K562 (cell line): ENCODE measurements at regions of chr9 and their contacts with region 1.

Region 1: GRCh38 chr9:4382722-4383317 is 83.0 kb upstream of the GLIS3 start:
- DNase-seq: peak in 1 of 4 experiments; percentile 10
- ATAC-seq: no peak
- H3K4me3 ChIP-seq: no peak overlapping the region
- H3K27ac ChIP-seq: no peak overlapping the region
- H3K4me1 ChIP-seq: no peaks in the 10 kb centered on the region
- H3K27me3 ChIP-seq: no peaks in the 10 kb centered on the region
- CTCF ChIP-seq: peak in 2 of 3 experiments; percentile 30 to 53; a peak in 3 of 6 replicates
- EP300 ChIP-seq: no peak
- POLR2A ChIP-seq: no peak
- RAD21 ChIP-seq: peak in 1 of 2 experiments; percentile 40; a peak in 2 of 4 replicates

Region 2: GRCh38 chr9:4297151-4297785 is 85.6 kb before region 1 on chr9:
- CTCF ChIA-PET with region 1: no interaction called
- POLR2A ChIA-PET with region 1: no interaction called
- in situ Hi-C with region 1: no loop called
- intact Hi-C with region 1: no loop called
- DNase-seq: peak; percentile 15 to 46 (median 28)
- ATAC-seq: peak; percentile 91
- H3K4me3 ChIP-seq: peak overlapping the region; percentile 19
- H3K27ac ChIP-seq: no peak overlapping the region
- H3K4me1 ChIP-seq: peaks cover 0 to 20% of the 10 kb centered on the region in 2 experiments; a peak in 2 of 5 replicates
- H3K27me3 ChIP-seq: peaks cover 8 to 23% of the 10 kb centered on the region in 2 experiments; a peak in 3 of 5 replicates
- CTCF ChIP-seq: peak; percentile 15 to 26 (median 24); a peak in 2 of 6 replicates
- EP300 ChIP-seq: no peak
- POLR2A ChIP-seq: no peak
- RAD21 ChIP-seq: no peak; a peak in 2 of 4 replicates

Region 3: DNA sequence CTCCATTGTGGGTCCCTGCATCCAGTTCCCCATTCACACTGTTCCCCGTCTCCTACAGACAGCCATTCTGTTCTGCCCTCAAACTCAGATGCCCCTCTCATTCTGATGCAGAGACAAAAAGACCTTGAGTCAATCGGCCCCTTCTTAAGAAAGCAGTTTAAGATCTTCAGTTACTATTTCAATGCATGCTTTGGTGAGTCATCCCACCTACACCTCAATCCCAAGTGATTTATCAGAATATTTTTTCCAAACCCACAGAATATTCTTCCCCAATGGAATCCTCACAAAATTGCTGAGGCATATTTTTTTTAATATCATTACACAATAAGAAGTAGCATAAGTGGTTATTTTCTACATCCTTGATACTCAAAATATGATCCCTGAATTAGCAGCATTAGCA is 15.1 kb after region 1 on chr9:
- CTCF ChIA-PET with region 1: no interaction called
- POLR2A ChIA-PET with region 1: no interaction called
- in situ Hi-C with region 1: no loop called
- intact Hi-C with region 1: no loop called
- DNase-seq: no peak
- ATAC-seq: no peak
- H3K4me3 ChIP-seq: no peak overlapping the region
- H3K27ac ChIP-seq: no peak overlapping the region
- H3K4me1 ChIP-seq: no peaks in the 10 kb centered on the region
- H3K27me3 ChIP-seq: no peaks in the 10 kb centered on the region
- CTCF ChIP-seq: no peak
- EP300 ChIP-seq: no peak
- POLR2A ChIP-seq: no peak
- RAD21 ChIP-seq: no peak

Region 4: DNA sequence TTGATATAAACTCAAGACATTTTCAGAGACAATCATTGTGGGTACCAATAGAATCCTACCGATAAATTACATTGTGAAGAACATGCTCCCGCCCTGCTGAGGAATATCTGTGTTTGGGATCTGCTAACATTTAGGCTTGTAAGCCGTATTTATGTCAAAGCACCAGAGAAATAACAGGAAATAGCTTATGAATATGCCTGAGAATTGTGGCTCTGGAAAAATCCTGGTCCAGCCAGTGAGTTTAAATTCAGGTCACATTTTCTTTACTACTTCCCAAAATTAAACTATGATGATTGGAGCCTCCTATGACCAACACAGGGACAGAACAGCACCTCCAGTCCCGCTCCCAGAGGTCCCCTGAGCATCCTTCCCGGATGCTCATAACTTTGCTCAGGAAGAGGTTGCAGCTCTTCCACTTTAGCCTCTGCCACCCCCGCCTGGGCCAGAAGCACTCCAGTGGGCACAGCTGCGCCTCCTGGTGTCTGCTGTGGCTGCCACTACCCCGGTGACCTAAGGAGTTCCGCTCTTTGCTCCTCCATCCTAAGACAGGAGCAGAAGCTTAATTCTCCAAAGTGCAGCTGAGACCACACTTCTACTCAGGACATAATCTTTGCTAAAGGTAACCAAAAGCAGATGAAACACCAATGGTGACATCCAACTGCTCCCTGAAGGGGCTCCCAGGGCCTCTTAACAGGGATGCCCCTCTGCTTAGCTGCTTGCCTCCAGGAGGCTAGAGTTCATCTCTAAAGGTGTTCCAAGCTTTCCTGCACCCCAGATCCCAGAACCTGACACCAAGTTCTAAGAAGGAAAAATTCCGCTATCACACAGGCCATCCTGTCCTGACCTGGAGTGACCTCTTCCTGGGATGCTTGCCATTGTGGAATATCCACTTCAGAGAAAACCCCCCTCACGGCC is 166.2 kb after region 1 on chr9:
- CTCF ChIA-PET with region 1: no interaction called
- POLR2A ChIA-PET with region 1: interaction called, 3 read pairs
- in situ Hi-C with region 1: no loop called
- intact Hi-C with region 1: loop called (anchors 5 kb)
- DNase-seq: peak; percentile 5 to 22 (median 13)
- ATAC-seq: peak; percentile 86
- H3K4me3 ChIP-seq: no peak overlapping the region
- H3K27ac ChIP-seq: no peak overlapping the region
- H3K4me1 ChIP-seq: no peaks in the 10 kb centered on the region
- H3K27me3 ChIP-seq: no peaks in the 10 kb centered on the region
- CTCF ChIP-seq: peak; percentile 51 to 64 (median 51)
- EP300 ChIP-seq: no peak
- POLR2A ChIP-seq: no peak
- RAD21 ChIP-seq: peak; percentile 17 to 46; a peak in 3 of 4 replicates

Region 5: GRCh38 chr9:4620057-4620760 is 237.4 kb after region 1 on chr9:
- CTCF ChIA-PET with region 1: no interaction called
- POLR2A ChIA-PET with region 1: no interaction called
- in situ Hi-C with region 1: no loop called
- intact Hi-C with region 1: loop called (anchors 10 kb)
- DNase-seq: no peak
- ATAC-seq: no peak
- H3K4me3 ChIP-seq: no peak overlapping the region
- H3K27ac ChIP-seq: no peak overlapping the region
- H3K4me1 ChIP-seq: no peaks in the 10 kb centered on the region; a peak in 1 of 5 replicates
- H3K27me3 ChIP-seq: peaks cover 4 to 5% of the 10 kb centered on the region in 2 experiments
- CTCF ChIP-seq: no peak
- EP300 ChIP-seq: no peak
- POLR2A ChIP-seq: no peak
- RAD21 ChIP-seq: no peak